Activated CD8-positive, alpha-beta T cell treated with anti-CD3 and anti-CD28 coated beads for 36 hours (primary cell): ENCODE measurements at regions of chr18 and their contacts with region 1.

Region 1: DNA sequence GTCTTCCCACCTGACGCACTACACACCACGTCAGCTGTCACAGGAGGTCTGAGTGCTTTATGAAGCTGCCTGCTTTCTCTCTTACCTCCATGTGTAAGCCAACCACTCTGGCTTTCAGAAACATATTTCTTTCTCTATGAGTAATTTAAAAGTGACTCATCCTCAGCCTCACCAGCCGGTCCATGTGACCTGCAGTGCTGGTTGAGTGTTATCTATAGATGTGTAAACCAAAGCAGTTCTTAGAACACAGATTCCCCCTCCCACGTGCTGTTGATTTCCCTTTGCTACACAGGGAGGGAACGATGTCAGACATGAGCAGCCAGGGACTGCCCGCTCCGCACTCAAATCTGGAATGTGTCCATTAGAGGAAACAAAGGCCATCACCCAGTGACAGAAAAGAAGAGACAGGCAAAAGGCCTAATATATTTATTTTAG is 157.8 kb downstream of the BCL2 start:
- DNase-seq: peak; percentile 94
- ATAC-seq: peak; percentile 75
- H3K4me3 Mint-ChIP-seq: peak overlapping the region; percentile 85
- H3K27ac Mint-ChIP-seq: peak overlapping the region; percentile 99
- H3K4me1 Mint-ChIP-seq: peaks cover 92% of the 10 kb centered on the region
- H3K27me3 Mint-ChIP-seq: no peaks in the 10 kb centered on the region
- CTCF ChIP-seq: no peak

Region 2: GRCh38 chr18:63098018-63098981 is 63.5 kb before region 1 on chr18:
- CTCF ChIA-PET with region 1: no interaction called
- POLR2A ChIA-PET with region 1: no interaction called
- intact Hi-C with region 1: no loop called
- DNase-seq: peak; percentile 84
- ATAC-seq: peak; percentile 80
- H3K4me3 Mint-ChIP-seq: peak overlapping the region; percentile 13
- H3K27ac Mint-ChIP-seq: peak overlapping the region; percentile 74
- H3K4me1 Mint-ChIP-seq: peaks cover 41% of the 10 kb centered on the region
- H3K27me3 Mint-ChIP-seq: peaks cover 2% of the 10 kb centered on the region
- CTCF ChIP-seq: no peak

Region 3: DNA sequence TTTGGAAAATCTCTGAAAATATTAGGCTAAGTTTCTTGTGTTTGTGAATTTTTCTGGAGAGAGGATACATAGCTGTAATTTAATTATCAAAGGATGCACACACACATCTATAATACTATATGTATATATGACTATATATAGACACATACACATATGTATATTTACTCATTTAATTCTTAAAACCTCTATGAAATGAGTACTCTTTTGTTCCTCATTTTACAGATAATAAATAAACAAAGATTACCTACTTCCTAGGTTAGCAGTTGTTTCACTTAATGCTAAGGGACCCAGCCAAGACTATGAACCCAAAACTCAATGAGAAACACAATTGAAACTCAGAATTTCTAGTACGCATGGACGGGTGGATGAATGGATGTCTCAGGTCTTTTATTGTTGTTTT is 12.2 kb after region 1 on chr18:
- CTCF ChIA-PET with region 1: interaction called, 12 read pairs
- POLR2A ChIA-PET with region 1: interaction called, 6 read pairs
- intact Hi-C with region 1: no loop called
- DNase-seq: no peak
- ATAC-seq: no peak
- H3K4me3 Mint-ChIP-seq: no peak overlapping the region
- H3K27ac Mint-ChIP-seq: no peak overlapping the region
- H3K4me1 Mint-ChIP-seq: peaks cover 54% of the 10 kb centered on the region
- H3K27me3 Mint-ChIP-seq: no peaks in the 10 kb centered on the region
- CTCF ChIP-seq: no peak

Region 4: GRCh38 chr18:63180971-63181376 is 19.2 kb after region 1 on chr18:
- CTCF ChIA-PET with region 1: interaction called, 5 read pairs
- POLR2A ChIA-PET with region 1: interaction called, 10 read pairs
- intact Hi-C with region 1: no loop called
- DNase-seq: no peak
- ATAC-seq: peak; percentile 26
- H3K4me3 Mint-ChIP-seq: no peak overlapping the region
- H3K27ac Mint-ChIP-seq: peak overlapping the region; percentile 13
- H3K4me1 Mint-ChIP-seq: peaks cover 71% of the 10 kb centered on the region
- H3K27me3 Mint-ChIP-seq: no peaks in the 10 kb centered on the region
- CTCF ChIP-seq: no peak

Region 5: DNA sequence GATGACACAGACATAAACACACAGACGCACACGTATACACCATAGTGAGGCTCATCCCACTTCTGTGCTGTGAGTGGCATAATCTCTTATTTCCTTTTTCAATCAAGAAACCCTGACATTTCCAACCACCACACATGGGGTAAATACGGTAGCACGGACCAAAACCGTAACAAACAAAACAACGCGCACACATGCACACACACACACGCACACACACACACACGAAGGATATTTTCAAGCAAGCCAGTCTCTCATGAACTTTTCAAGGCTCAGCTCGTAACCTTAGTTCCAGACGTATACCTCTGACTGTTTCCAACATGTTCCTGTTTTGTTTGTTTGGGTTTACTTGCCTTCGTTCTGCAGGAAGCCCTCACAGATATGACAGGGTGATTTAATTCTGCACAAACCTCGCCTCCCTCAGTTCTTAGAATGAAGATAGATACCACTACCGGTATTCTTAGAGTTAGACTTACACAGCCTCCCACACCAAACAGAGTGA is 38.0 kb after region 1 on chr18:
- CTCF ChIA-PET with region 1: interaction called, 9 read pairs
- POLR2A ChIA-PET with region 1: interaction called, 50 read pairs
- intact Hi-C with region 1: loop called (anchors 2 kb)
- DNase-seq: peak; percentile 69
- ATAC-seq: peak; percentile 80
- H3K4me3 Mint-ChIP-seq: no peak overlapping the region
- H3K27ac Mint-ChIP-seq: no peak overlapping the region
- H3K4me1 Mint-ChIP-seq: peaks cover 47% of the 10 kb centered on the region
- H3K27me3 Mint-ChIP-seq: no peaks in the 10 kb centered on the region
- CTCF ChIP-seq: no peak

Region 6: DNA sequence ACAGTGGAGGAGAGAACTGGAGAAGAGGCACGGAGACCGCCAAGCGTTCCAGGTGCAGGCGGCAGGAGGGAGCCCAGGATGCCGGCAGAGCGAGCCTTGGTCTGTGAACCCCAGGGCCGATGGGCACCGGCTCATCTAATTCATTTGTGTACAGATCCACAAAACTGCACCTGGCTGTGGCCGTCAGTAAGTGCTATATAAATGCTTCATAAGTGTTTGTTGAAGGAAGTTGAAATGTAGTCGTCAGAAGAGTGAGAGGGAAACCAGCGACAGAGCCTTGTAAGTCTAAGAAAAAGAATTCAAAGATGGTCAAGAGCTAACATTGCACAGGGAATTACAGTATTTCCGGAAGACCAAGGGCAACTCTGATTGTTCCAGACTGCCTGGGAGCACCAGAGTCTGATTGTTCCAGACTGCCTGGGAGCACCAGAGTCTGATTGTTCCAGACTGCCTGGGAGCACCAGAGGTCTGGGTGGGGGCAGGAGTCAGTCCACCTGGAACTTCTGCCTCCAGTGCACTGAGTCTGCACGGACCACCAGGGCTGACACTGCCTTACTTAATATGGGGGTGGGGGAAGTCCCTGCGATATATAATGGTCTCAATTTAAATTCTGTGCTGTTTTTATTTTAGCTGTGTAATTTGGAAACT is 45.5 kb after region 1 on chr18:
- CTCF ChIA-PET with region 1: interaction called, 9 read pairs
- POLR2A ChIA-PET with region 1: interaction called, 29 read pairs
- intact Hi-C with region 1: loop called (anchors 2 kb)
- DNase-seq: peak; percentile 75
- ATAC-seq: peak; percentile 62
- H3K4me3 Mint-ChIP-seq: peak overlapping the region; percentile 72
- H3K27ac Mint-ChIP-seq: peak overlapping the region; percentile 84
- H3K4me1 Mint-ChIP-seq: peaks cover 94% of the 10 kb centered on the region
- H3K27me3 Mint-ChIP-seq: no peaks in the 10 kb centered on the region
- CTCF ChIP-seq: no peak

Region 7: GRCh38 chr18:63312737-63313395 is 151.1 kb after region 1 on chr18:
- CTCF ChIA-PET with region 1: interaction called, 10 read pairs
- POLR2A ChIA-PET with region 1: interaction called, 68 read pairs
- intact Hi-C with region 1: loop called (anchors 2 kb)
- DNase-seq: no peak
- ATAC-seq: no peak
- H3K4me3 Mint-ChIP-seq: peak overlapping the region; percentile 88
- H3K27ac Mint-ChIP-seq: peak overlapping the region; percentile 72
- H3K4me1 Mint-ChIP-seq: peaks cover 66% of the 10 kb centered on the region
- H3K27me3 Mint-ChIP-seq: no peaks in the 10 kb centered on the region
- CTCF ChIP-seq: no peak